Heart right ventricle (tissue), 16 donors: ENCODE measurements at regions of chr6 and their contacts with region 1.

Region 1: DNA sequence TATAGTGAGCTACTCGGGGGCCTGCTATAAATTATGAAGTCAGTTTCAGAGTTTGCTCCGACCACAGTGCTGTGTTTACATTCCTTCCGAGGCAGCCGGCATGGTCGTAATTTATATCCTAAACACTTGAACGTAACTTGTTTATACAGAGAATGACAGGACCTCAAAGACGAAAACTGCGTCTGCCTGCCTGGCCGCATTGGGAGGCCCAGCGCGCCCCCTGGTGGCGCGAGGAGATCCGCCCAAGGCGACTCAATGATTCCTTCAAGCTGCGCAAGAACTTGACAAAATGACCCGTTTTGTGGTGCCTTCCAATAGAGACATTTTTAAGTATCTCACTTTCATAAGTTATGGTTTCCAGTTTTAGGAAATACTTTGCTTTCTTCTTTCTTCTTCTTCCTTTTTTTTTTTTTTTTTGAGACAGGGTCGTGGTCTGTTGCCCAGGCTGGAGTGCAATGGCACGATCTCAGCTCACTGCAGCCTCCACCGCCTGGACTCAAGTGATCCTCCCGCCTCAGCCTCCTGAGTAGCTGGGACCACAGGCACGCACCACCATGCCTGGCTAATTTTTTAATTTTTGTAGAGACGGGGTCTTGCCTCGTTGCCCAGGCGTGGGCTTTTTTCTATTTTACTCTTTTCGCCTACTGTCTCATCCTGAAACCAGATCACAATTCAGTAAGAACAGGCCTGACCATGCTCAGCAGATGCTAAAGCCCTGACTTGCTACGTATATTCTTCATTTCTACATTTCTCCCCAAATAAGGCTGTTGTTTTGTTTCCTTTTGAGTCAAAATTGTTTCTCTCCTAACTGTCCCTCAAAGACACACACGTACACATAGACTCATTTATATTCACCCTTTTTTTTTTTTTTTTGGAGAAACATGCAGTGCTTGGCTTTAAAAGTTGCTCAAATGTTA is 7.8 kb downstream of the FOXF2 start:
- DNase-seq: peak; percentile 45 to 65
- ATAC-seq: peak in 5 of 8 donors; percentile 52 to 73 (median 69)
- H3K4me3 ChIP-seq: no peak overlapping the region
- H3K27ac ChIP-seq: no peak overlapping the region
- H3K4me1 ChIP-seq: peaks cover 0 to 17% (median 0%) of the 10 kb centered on the region in 9 donors
- H3K27me3 ChIP-seq: peaks cover 26 to 99% (median 93%) of the 10 kb centered on the region in 7 donors
- CTCF ChIP-seq: peak; percentile 82 to 98 (median 95)

Region 2: DNA sequence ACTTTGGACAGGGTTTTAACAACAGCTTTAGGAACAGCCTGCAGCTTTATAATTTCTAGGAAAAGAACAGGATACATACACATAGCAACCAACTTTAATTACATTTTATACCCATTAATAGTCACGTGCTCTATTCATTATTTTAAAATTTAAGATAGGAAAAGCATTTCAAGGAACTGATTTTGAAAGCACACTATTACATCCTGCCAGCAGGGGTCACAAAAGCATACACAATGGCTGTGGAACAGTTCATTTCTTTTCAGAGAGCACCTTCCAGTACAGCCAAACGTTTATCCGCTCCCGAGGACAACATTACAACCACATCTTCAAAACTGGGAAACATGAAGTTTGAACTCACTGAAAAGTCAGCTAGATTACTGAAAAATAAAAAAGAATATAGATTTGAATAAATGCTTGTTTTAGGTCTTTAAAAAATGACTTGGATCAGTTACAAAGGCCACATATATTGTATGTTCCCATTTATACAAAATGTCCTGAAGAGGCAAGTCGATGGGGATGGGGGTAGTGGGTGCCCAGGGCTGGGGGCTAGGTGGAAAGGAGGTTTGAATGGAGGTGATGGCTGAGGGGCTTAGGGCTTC is 599.6 kb before region 1 on chr6:
- intact Hi-C with region 1: loop called in 7 of 10 experiments (anchors 2 to 5 kb)
- DNase-seq: peak in 1 of 2 donors; percentile 55
- ATAC-seq: peak in 3 of 8 donors; percentile 41 to 64 (median 53)
- H3K4me3 ChIP-seq: no peak overlapping the region
- H3K27ac ChIP-seq: no peak overlapping the region
- H3K4me1 ChIP-seq: no peaks in the 10 kb centered on the region
- H3K27me3 ChIP-seq: peaks cover 0 to 92% (median 83%) of the 10 kb centered on the region in 7 donors
- CTCF ChIP-seq: peak; percentile 60 to 89 (median 80)

Region 3: DNA sequence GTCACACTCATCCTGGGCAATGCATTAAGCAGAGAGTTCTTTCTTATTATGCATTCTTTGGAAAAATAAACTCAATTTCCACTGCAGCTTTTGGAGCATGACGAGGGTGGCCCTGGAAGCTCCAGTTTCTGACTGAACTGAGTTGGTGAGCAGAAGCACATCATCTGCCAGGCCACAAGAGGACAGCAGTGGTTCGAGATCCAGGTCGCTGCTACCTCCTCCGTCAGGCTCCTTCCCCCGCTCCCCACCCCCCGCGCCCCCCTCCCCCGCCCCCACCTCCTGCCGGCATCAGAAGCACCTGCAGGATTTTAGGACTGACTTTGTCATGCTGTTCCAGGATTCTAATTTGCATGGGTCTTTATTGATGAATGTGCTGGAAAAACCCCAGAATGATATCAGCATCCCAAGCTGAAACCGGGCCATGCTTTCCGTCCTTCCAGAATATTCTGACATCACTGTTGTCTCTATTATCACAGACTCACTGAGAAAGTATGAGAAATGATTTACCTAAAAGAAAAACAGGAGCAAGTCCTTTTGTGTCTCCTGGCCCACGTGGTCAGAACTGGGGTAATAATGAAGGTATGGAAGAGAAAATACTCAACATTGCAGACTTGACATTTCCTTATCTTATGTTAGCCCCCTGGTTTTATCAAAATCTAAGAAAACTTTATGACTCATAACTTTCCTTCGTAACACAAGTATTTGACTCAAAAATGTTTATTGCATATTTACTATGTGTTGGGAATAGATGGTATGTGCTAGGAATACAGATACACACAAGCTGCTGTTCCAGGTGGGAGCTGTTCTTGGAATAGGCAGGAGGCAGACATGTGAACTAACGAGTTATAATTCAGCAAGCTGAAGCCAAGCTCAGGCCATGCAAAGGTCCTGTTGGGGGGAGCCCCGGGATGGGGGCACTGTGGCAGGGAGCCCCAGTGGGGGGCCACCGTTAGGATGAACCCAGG is 484.1 kb before region 1 on chr6:
- intact Hi-C with region 1: loop called in 1 of 10 experiments (anchors 10 kb)
- DNase-seq: peak in 1 of 2 donors; percentile 14
- ATAC-seq: peak in 1 of 8 donors; percentile 42
- H3K4me3 ChIP-seq: no peak overlapping the region
- H3K27ac ChIP-seq: no peak overlapping the region
- H3K4me1 ChIP-seq: no peaks in the 10 kb centered on the region
- H3K27me3 ChIP-seq: peaks cover 0 to 41% (median 28%) of the 10 kb centered on the region in 7 donors
- CTCF ChIP-seq: peak in 7 of 9 donors; percentile 31 to 55 (median 39)

Region 4: DNA sequence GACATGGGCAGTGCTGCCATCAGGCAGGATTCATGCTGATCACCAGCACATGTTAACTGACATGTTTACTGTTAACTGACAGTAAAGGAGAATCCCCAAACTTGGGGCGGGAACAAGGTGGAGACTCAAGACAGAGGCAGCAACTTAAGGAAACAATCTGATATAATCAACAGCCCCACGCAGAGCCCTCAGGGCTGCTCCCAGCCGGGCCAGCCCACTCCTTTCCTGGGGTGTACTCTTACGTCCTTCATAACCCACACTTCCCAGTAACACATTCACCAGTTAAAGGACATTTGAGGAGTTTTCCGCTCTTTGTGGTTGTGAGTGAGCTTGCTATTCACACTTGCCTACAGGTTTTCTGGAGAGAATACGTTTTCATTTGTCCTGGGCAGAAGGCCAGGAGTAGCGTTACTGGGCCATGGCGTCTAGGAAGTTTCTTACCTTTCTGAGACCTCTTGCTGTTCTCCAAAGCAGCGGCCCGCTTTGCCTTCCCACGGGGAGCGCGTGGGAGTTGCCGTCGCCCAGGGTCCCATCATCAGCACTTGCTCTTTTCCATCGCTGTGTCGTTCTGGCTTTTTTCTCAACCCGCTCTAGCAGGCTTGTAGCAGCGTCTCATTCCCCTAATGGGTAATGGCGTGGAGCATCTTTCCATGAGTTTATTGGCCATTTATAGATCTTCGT is 48.6 kb after region 1 on chr6:
- intact Hi-C with region 1: no loop called
- DNase-seq: no peak
- ATAC-seq: no peak
- H3K4me3 ChIP-seq: no peak overlapping the region
- H3K27ac ChIP-seq: no peak overlapping the region
- H3K4me1 ChIP-seq: no peaks in the 10 kb centered on the region
- H3K27me3 ChIP-seq: peaks cover 0 to 43% (median 11%) of the 10 kb centered on the region in 7 donors
- CTCF ChIP-seq: no peak